ENCODE measurements at regions of chr9 and their contacts with region 1.

Region 1: DNA sequence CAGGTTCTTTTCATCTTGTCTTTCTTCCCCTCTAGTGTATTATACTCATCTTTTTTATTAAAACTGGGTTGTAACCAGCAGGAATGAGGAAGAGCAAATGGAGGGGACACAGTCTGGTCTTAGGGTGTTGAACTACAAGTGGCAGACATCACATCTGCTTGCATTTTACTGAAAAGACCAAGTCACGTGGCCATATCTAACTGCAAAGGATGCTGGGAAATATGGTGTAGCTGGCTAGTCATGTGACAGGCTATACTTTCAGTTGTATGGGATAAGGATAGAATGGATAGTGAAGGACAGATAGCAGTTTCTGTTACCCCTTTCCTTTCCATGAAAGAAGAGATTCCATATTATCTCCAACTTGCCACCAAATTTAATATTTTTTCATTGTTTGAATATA is 13.0 kb upstream of the FGD3 start:
- DNase-seq: no peak
- ATAC-seq: no peak

Region 2: DNA sequence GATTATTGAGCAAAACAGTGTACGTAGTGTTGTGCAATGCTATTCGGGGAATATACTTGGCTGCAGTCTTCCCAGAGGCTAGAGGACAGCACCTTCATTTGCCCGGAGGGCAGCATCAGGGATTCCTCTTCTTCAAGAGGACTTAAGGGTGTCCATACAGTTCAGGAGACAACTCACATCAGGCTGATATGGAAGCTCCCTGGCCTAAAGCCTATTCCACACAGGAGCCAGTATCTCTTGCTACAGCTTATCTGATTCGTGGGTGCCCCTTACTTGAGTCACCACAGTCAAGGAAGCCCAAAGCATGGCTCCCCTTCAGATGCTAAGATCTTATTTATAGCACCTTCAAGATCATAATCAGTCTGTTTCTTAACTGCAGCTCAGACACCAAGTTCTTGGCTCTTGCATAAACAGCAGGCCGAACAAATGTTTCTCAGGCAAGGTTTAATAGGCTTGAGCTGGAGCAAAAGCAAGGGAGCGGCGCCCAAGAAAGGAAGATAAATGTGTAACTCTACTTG is 1364.8 kb after region 1 on chr9:
- intact Hi-C with region 1: loop called (anchors 10 kb)
- DNase-seq: no peak
- ATAC-seq: peak; percentile 62